ENCODE measurements at regions of chr14 and their contacts with region 1.

Region 1: DNA sequence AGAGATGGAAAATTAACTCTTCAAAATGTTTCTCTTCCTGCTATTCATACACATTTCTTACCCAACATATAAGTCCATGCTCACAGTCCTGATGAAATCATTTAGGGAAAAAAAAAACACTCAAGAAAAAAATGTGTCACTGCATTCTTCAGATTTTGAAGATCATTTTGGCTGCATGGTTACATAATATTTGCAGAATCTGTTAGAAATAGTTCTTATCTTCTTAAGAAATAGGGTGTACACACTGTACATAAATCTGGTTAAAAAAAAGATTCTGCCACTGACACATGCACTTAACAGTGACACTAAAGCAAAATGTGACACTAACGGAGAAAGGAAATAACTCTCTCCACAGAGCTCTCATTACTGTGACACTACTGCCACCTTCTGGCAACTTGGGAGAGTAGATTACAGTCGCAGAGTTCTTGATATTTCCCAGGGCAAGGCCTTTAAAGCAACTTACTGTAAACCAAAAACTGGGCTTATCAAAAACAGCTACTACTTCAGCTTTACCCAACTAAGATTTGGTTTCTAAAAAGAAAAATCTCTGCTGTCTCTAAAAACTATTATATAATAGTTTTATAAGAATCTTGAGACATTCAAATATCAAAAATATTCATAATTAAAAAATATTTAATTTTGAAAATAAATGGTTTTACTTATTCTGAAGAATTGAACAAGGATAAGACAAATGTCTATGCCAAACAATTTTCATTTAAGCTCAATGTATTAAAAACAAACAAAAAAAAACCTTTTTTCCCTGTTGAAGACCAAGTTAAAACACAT is 65.0 kb downstream of the SETD3 start:
- DNase-seq: peak; percentile 94
- H3K4me3 ChIP-seq: peak overlapping the region; percentile 0
- H3K27ac ChIP-seq: no peak overlapping the region
- H3K4me1 ChIP-seq: peaks cover 22% of the 10 kb centered on the region
- H3K27me3 ChIP-seq: no peaks in the 10 kb centered on the region
- CTCF ChIP-seq: peak; percentile 88

Region 2: DNA sequence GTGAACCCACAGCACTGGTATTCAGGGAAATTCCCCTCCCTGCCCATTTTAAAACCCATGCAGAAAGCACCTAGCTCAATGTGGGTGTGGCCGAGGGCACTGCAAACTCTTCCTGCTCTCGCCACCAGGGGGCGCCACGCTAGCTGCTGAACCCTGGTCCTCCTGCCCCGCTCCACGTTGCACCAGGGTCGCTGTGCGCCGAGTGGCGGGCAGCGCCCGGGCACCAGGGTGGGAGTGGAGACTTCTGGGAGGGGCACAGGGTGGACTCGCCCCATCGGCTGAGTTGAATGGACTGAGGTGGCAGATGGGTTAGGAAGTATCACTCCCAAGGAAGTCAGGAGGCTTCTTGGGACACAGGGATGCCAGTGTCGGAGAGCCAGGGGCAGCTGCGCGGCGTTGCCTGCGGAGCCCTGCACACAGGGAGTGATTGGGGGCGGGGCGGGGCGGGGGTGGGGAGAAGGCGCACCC is 95.5 kb before region 1 on chr14:
- CTCF ChIA-PET with region 1: interaction called, 29 read pairs
- POLR2A ChIA-PET with region 1: no interaction called
- intact Hi-C with region 1: loop called (anchors 1 kb)
- DNase-seq: peak; percentile 78
- H3K4me3 ChIP-seq: no peak overlapping the region
- H3K27ac ChIP-seq: no peak overlapping the region
- H3K4me1 ChIP-seq: no peaks in the 10 kb centered on the region
- H3K27me3 ChIP-seq: no peaks in the 10 kb centered on the region
- CTCF ChIP-seq: peak; percentile 99

Region 3: DNA sequence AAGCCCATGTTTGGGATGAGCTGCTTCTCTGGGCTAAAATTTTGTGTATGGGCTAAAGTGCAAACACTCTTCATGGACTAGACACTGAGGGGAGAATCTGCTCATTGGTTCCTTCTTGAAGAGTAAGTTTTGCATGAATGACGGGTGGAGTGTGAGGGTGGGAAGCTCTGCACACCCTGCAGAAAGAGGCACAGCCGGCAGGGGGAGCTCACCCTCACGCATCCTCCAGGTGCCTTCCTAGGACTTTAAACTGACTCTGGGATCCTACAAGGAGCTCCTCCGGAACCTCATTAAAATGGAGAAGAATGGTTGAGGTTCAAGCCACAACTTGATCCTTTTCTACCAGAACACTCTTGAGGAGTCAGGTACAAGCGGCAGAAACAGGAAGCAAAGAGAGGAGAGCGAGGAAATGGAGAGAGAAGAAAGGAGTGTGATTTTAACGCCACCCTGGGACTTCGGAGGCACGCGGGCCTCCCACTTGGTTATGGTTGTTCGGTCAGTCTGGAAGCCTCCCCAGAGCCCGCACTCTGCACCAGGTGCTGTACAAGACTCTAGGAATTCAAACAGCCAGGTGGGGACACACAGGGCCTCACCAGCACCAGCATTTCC is 22.5 kb before region 1 on chr14:
- CTCF ChIA-PET with region 1: interaction called, 10 read pairs
- POLR2A ChIA-PET with region 1: no interaction called
- intact Hi-C with region 1: no loop called
- DNase-seq: peak; percentile 69
- H3K4me3 ChIP-seq: no peak overlapping the region
- H3K27ac ChIP-seq: no peak overlapping the region
- H3K4me1 ChIP-seq: peaks cover 3% of the 10 kb centered on the region
- H3K27me3 ChIP-seq: no peaks in the 10 kb centered on the region
- CTCF ChIP-seq: peak; percentile 90

Measured in A673 (cell line).